ENCODE measurements at regions of chr11 and their contacts with region 1.

Region 1: GRCh38 chr11:65194564-65194963 is 12.8 kb downstream of the CAPN1 start:
- DNase-seq: no peak
- ATAC-seq: no peak
- H3K4me3 ChIP-seq: no peak overlapping the region
- H3K27ac ChIP-seq: no peak overlapping the region
- H3K4me1 ChIP-seq: no peaks in the 10 kb centered on the region
- H3K27me3 ChIP-seq: no peaks in the 10 kb centered on the region
- CTCF ChIP-seq: no peak

Region 2: GRCh38 chr11:65078151-65078550 is 116.4 kb before region 1 on chr11:
- CTCF ChIA-PET with region 1: no interaction called
- POLR2A ChIA-PET with region 1: no interaction called
- in situ Hi-C with region 1: no loop called
- intact Hi-C with region 1: no loop called
- DNase-seq: peak; percentile 58
- ATAC-seq: peak; percentile 85
- H3K4me3 ChIP-seq: no peak overlapping the region
- H3K27ac ChIP-seq: peak overlapping the region; percentile 41
- H3K4me1 ChIP-seq: peaks cover 27% of the 10 kb centered on the region
- H3K27me3 ChIP-seq: no peaks in the 10 kb centered on the region
- CTCF ChIP-seq: peak; percentile 90

Region 3: DNA sequence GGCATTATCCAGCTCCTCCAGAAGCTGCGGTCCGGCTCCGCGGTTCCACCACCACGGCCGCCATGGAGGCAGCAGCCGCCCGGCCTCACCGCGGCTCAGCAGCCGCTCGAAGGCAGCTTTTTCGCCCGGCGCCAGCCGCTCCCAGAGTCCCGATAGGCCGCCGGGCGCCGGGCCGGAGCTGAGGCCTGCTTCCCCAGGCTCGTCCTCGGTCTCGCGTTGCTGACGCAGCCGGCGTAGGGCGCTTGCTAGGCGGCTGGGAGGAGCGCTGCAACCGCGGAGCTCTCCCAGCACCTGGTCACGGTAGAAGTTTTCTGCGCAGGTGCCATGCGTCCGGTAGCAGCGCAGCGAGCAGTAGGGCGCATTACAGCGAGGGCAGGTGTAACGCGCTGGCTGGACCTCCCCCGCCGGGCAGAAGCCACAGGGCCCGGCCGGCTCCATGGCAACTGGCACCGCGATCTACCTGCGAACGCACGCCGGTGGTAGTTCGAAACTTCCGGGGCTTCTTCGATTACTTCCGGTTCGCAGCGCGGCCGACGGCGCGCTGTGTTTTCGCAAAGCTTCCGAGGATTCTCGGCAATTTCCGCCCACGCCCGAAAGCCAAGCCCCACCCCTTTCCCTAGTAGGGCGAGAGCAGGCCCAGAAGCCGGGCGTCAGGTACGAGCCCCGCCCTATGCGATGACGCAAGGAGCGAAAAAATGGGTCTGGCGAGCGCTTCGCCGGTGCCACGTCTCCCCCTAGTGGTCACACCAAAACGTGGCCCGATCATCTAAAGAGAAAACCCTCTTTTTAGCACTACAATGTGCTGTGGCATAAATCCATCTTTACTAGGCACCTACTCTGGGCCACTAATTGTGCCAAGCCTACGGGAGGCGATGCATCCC is 77.1 kb before region 1 on chr11 and contains the start of gene ZNHIT2:
- CTCF ChIA-PET with region 1: no interaction called
- POLR2A ChIA-PET with region 1: interaction called, 14 read pairs
- in situ Hi-C with region 1: no loop called
- intact Hi-C with region 1: no loop called
- DNase-seq: peak; percentile 99
- ATAC-seq: peak; percentile 77
- H3K4me3 ChIP-seq: peak within 1 kb of the TSS; percentile 70 to 78
- H3K27ac ChIP-seq: peak within 1 kb of the TSS; percentile 89
- H3K4me1 ChIP-seq: peaks cover 33% of the 10 kb centered on the region
- H3K27me3 ChIP-seq: no peaks in the 10 kb centered on the region
- CTCF ChIP-seq: peak; percentile 99
- total RNA-seq, gene ZNHIT2: 27.1 TPM

Region 4: GRCh38 chr11:65180877-65181568 is 13.5 kb before region 1 on chr11:
- CTCF ChIA-PET with region 1: interaction called, 12 read pairs
- POLR2A ChIA-PET with region 1: no interaction called
- in situ Hi-C with region 1: no loop called
- intact Hi-C with region 1: no loop called
- DNase-seq: no peak
- ATAC-seq: peak; percentile 83
- H3K4me3 ChIP-seq: peak overlapping the region; percentile 79 to 95
- H3K27ac ChIP-seq: peak overlapping the region; percentile 82
- H3K4me1 ChIP-seq: peaks cover 16% of the 10 kb centered on the region
- H3K27me3 ChIP-seq: no peaks in the 10 kb centered on the region
- CTCF ChIP-seq: peak; percentile 90

Region 5: DNA sequence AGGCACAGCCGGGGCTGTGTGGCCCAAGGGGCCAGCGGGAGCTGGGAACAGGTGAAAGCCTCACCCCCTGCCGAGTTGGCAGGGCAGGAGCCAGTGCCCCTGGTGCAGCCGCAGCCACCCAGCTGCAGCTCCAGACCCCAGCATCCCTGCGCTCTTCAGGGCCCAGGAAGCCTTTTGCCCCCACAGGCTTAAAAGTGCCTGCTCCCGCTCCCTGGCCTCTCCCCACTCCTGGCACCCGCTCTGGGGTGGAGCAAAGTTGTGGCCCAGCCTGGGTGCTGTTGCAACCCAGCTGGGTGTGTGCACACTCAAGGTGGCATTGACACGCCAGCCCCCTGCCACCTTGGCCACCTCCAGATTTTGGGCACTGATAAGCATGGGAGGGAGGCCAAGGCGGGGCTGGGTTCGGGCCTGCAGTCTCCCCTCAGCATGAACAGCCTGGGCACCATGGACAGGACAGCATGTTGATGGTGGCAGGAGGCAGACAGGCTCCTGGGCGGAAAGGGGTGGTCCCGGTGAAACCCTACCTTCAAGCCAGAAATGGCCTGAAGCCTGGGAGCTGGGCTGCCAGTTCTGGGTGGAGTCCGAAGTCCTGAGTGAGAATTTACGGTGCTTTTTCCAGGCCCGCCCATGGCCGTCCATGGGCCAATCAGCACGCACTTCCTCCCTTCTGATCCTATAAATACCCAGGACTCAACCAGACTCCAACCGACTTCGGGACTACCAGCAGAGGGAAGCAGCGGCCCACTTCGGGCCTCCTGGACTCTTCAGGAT is 549.5 kb after region 1 on chr11:
- CTCF ChIA-PET with region 1: no interaction called
- POLR2A ChIA-PET with region 1: no interaction called
- in situ Hi-C with region 1: no loop called
- intact Hi-C with region 1: no loop called
- DNase-seq: no peak
- ATAC-seq: peak; percentile 95
- H3K4me3 ChIP-seq: peak overlapping the region in 1 of 2 experiments; percentile 26; a peak in 2 of 4 replicates
- H3K27ac ChIP-seq: no peak overlapping the region
- H3K4me1 ChIP-seq: 0 out of 2 replicates have a peak, but pooled peaks cover 7% of the 10 kb centered on the region
- H3K27me3 ChIP-seq: peaks cover 5% of the 10 kb centered on the region; the same call in 1 of the 2 replicates
- CTCF ChIP-seq: peak; percentile 89